AG04450 (cell line): ENCODE measurements at regions of chr15 and their contacts with region 1.

Region 1: GRCh38 chr15:58212909-58213526 is 74.8 kb downstream of the AQP9 start:
- DNase-seq: no peak
- H3K4me3 ChIP-seq: no peak overlapping the region
- H3K27ac ChIP-seq: no peak overlapping the region
- H3K27me3 ChIP-seq: no peaks in the 10 kb centered on the region
- CTCF ChIP-seq: peak; percentile 71

Region 2: GRCh38 chr15:58201516-58201915 is 11.5 kb before region 1 on chr15:
- CTCF ChIA-PET with region 1: interaction called, 4 read pairs
- POLR2A ChIA-PET with region 1: interaction called, 12 read pairs
- DNase-seq: no peak
- H3K4me3 ChIP-seq: no peak overlapping the region
- H3K27ac ChIP-seq: no peak overlapping the region
- H3K27me3 ChIP-seq: no peaks in the 10 kb centered on the region
- CTCF ChIP-seq: no peak

Region 3: DNA sequence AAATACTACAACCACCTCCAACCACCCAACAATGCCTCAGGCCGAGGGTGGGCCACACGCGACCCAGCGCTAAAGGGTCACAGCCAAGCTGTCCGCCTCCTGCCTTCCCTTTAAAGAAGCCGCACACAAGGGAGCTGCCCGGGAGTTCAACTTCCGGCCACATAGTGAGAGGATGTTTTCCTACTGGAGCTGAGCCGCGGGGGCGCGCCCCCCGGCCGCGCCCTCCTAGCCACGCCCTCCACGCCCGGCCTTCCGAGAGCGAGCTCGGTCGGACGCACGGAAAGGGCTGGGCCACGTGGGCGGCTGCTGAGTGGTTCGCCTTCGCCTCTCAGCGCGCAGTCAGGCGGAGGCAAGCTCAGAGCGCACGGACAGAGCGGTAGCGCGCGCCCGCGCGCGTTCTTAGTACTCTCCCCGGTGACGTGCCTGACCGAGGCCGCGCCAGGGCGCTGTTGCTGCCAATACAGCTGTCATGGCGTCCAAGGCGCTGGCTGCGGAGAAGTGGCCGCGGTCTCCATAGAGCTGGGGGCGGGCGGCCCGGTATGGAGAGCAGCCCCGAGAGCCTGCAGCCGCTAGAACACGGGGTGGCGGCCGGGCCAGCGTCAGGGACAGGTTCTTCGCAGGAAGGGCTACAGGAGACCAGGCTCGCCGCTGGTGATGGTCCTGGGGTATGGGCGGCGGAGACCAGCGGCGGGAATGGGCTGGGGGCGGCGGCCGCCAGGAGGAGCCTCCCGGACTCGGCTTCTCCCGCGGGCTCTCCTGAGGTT is 558.0 kb after region 1 on chr15 and contains the start of gene MINDY2:
- CTCF ChIA-PET with region 1: interaction called, 10 read pairs
- POLR2A ChIA-PET with region 1: interaction called, 4 read pairs
- DNase-seq: peak; percentile 98
- H3K4me3 ChIP-seq: peak within 1 kb of the TSS; percentile 79
- H3K27ac ChIP-seq: peak within 1 kb of the TSS; percentile 97
- H3K27me3 ChIP-seq: no peaks in the 10 kb centered on the region
- CTCF ChIP-seq: peak; percentile 36
- polyA plus RNA-seq, gene MINDY2: 11.0 and 17.5 TPM in 2 replicates